ENCODE measurements at regions of chr6 and their contacts with region 1.

Region 1: GRCh38 chr6:108541838-108542759 is 18.6 kb upstream of the FOXO3 start:
- DNase-seq: peak; percentile 84
- H3K4me3 ChIP-seq: peak overlapping the region in 1 of 8 donors; percentile 40
- H3K27ac ChIP-seq: no peak overlapping the region
- H3K4me1 ChIP-seq: peaks cover 0 to 22% (median 10%) of the 10 kb centered on the region in 6 donors
- H3K27me3 ChIP-seq: no peaks in the 10 kb centered on the region
- CTCF ChIP-seq: peak; percentile 67 to 98 (median 86)
- POLR2A ChIP-seq: no peak

Region 2: GRCh38 chr6:108782179-108783041 is 240.3 kb after region 1 on chr6:
- intact Hi-C with region 1: loop called (anchors 2 kb)
- DNase-seq: peak; percentile 95
- H3K4me3 ChIP-seq: peak overlapping the region; percentile 24 to 68 (median 38)
- H3K27ac ChIP-seq: peak overlapping the region in 5 of 8 donors; percentile 17 to 54 (median 37)
- H3K4me1 ChIP-seq: peaks cover 10 to 47% (median 30%) of the 10 kb centered on the region in 6 donors
- H3K27me3 ChIP-seq: no peaks in the 10 kb centered on the region
- CTCF ChIP-seq: peak; percentile 66 to 91 (median 83)
- POLR2A ChIP-seq: no peak

Region 3: GRCh38 chr6:108835218-108835850 is 293.2 kb after region 1 on chr6:
- intact Hi-C with region 1: loop called (anchors 10 kb)
- DNase-seq: peak; percentile 96
- H3K4me3 ChIP-seq: no peak overlapping the region
- H3K27ac ChIP-seq: no peak overlapping the region
- H3K4me1 ChIP-seq: peaks cover 9 to 38% (median 26%) of the 10 kb centered on the region in 6 donors
- H3K27me3 ChIP-seq: no peaks in the 10 kb centered on the region
- CTCF ChIP-seq: peak; percentile 93 to 99 (median 96)
- POLR2A ChIP-seq: no peak

Region 4: GRCh38 chr6:108896111-108896661 is 354.1 kb after region 1 on chr6:
- intact Hi-C with region 1: loop called (anchors 5 kb)
- DNase-seq: no peak
- H3K4me3 ChIP-seq: no peak overlapping the region
- H3K27ac ChIP-seq: peak overlapping the region in 7 of 8 donors; percentile 52 to 83 (median 79)
- H3K4me1 ChIP-seq: peaks cover 8 to 63% (median 47%) of the 10 kb centered on the region in 6 donors
- H3K27me3 ChIP-seq: no peaks in the 10 kb centered on the region
- CTCF ChIP-seq: no peak
- POLR2A ChIP-seq: no peak

Region 5: DNA sequence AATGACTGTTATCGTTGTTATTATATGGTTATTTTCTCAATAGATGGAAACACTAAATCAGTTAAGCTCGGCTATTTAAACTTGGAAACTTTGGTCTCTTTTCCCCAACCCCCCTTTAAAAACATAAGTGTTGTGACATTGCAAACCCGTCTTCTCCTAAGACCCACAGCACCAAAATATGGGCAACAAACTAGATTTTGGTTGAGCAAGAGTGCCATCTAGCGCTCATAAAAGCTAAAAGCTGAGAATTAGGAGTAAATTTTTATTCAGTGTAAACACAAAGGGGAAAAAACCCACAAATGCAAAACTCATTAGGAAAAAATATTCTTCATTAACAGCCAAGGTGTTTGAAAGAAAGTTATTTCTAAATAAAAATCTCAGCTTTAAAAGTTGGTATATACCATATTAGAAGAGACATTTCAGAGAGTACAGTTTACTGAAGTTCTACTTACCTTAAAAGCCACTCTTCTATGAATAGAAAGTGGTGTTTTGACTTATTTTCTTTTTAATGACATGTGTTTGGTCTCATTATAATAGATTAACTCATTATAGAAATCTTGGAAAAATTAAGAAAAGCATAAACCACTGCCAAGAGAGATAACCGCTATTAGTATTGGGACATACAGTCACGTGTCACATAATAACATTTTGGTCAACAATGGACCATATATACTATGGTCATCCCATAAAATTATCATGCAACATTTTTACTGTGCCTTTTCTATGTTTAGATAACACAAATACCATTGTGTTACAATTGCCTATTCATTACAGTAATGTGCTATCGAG is 531.4 kb after region 1 on chr6:
- intact Hi-C with region 1: loop called (anchors 5 kb)
- DNase-seq: no peak
- H3K4me3 ChIP-seq: no peak overlapping the region
- H3K27ac ChIP-seq: peak overlapping the region in 1 of 8 donors; percentile 10
- H3K4me1 ChIP-seq: peaks cover 17 to 66% (median 37%) of the 10 kb centered on the region in 6 donors
- H3K27me3 ChIP-seq: no peaks in the 10 kb centered on the region
- CTCF ChIP-seq: peak; percentile 55 to 76 (median 71)
- POLR2A ChIP-seq: no peak

Measured in spleen (tissue), 13 donors.